ENCODE measurements at regions of chr17 and their contacts with region 1.

Region 1: GRCh38 chr17:43713494-43714162 is 45.0 kb downstream of the SOST start:
- DNase-seq: peak; percentile 9
- H3K4me3 Mint-ChIP-seq: peak overlapping the region; percentile 76
- H3K27ac Mint-ChIP-seq: no peak overlapping the region
- H3K4me1 Mint-ChIP-seq: peaks cover 18% of the 10 kb centered on the region
- H3K27me3 Mint-ChIP-seq: peaks cover 38% of the 10 kb centered on the region

Region 2: GRCh38 chr17:43701318-43701743 is 12.3 kb before region 1 on chr17:
- intact Hi-C with region 1: loop called (anchors 1 kb)
- DNase-seq: no peak
- H3K4me3 Mint-ChIP-seq: no peak overlapping the region
- H3K27ac Mint-ChIP-seq: no peak overlapping the region
- H3K4me1 Mint-ChIP-seq: peaks cover 18% of the 10 kb centered on the region
- H3K27me3 Mint-ChIP-seq: peaks cover 18% of the 10 kb centered on the region